SK-N-SH (cell line): ENCODE measurements at regions of chr1 and their contacts with region 1.

Region 1: DNA sequence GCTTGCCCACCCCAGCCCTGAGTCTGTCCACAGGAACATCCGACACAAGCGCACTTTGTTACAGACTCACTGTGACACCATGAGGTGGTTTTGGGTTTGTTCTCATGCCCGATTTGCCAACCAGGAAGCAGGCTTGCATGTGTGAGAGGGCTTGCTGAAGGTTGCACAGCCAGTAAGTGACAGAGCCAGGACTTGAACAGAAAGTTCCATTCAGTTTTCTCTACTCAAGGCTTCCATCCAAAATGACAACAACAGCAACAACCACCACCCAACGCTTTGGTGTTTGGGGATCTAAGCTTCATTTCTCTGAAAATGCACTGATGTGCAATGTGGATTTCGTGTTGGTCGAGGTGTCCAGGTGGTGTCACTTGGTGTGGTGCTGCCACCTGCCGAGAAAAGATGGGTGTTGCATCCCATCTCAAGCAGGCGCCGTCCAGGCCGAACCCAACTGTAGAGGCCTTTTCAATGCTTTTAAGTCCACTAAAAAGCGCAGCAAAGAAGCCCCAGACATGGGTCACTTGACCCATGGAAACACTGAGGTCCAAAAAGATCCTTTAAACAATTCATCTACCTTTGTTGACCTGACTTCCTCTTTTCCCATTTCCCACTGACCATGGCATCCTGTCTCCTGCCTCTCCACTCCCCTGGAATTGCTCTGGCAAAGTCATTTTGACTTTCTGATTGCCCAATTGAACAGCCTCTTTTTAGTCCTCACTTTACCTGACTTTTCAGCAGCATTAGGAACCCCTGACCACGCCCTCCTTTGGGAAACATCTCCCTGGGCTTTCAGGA is 12.2 kb downstream of the CITED4 start:
- DNase-seq: peak; percentile 78
- H3K4me3 ChIP-seq: no peak overlapping the region
- H3K27ac ChIP-seq: no peak overlapping the region
- H3K4me1 ChIP-seq: no peaks in the 10 kb centered on the region; a peak in 1 of 4 replicates
- H3K27me3 ChIP-seq: no peaks in the 10 kb centered on the region
- CTCF ChIP-seq: peak; percentile 84
- EP300 ChIP-seq: no peak
- RAD21 ChIP-seq: peak; percentile 89

Region 2: GRCh38 chr1:40531381-40532061 is 318.5 kb before region 1 on chr1 and contains the start of gene ZNF684:
- CTCF ChIA-PET with region 1: interaction called, 23 read pairs
- POLR2A ChIA-PET with region 1: no interaction called
- DNase-seq: peak; percentile 86
- H3K4me3 ChIP-seq: peak within 1 kb of the TSS; percentile 71 to 76
- H3K27ac ChIP-seq: peak within 1 kb of the TSS; percentile 85 to 95
- H3K4me1 ChIP-seq: peaks cover 0 to 3% of the 10 kb centered on the region in 2 experiments; a peak in 2 of 4 replicates
- H3K27me3 ChIP-seq: no peaks in the 10 kb centered on the region
- CTCF ChIP-seq: no peak
- EP300 ChIP-seq: no peak
- RAD21 ChIP-seq: no peak
- polyA plus RNA-seq, gene ZNF684: 1.8 and 3.0 TPM in 2 replicates

Region 3: GRCh38 chr1:40763742-40764532 is 86.1 kb before region 1 on chr1:
- CTCF ChIA-PET with region 1: interaction called, 13 read pairs
- POLR2A ChIA-PET with region 1: no interaction called
- DNase-seq: no peak
- H3K4me3 ChIP-seq: no peak overlapping the region
- H3K27ac ChIP-seq: no peak overlapping the region
- H3K4me1 ChIP-seq: peaks cover 0 to 13% of the 10 kb centered on the region in 2 experiments; a peak in 2 of 4 replicates
- H3K27me3 ChIP-seq: no peaks in the 10 kb centered on the region
- CTCF ChIP-seq: no peak
- EP300 ChIP-seq: no peak
- RAD21 ChIP-seq: no peak

Region 4: GRCh38 chr1:40810927-40811326 is 39.1 kb before region 1 on chr1:
- CTCF ChIA-PET with region 1: interaction called, 10 read pairs
- POLR2A ChIA-PET with region 1: no interaction called
- DNase-seq: no peak
- H3K4me3 ChIP-seq: no peak overlapping the region
- H3K27ac ChIP-seq: no peak overlapping the region
- H3K4me1 ChIP-seq: no peaks in the 10 kb centered on the region
- H3K27me3 ChIP-seq: no peaks in the 10 kb centered on the region; the same call in 1 of the 2 replicates
- CTCF ChIP-seq: no peak
- EP300 ChIP-seq: no peak
- RAD21 ChIP-seq: no peak

Region 5: DNA sequence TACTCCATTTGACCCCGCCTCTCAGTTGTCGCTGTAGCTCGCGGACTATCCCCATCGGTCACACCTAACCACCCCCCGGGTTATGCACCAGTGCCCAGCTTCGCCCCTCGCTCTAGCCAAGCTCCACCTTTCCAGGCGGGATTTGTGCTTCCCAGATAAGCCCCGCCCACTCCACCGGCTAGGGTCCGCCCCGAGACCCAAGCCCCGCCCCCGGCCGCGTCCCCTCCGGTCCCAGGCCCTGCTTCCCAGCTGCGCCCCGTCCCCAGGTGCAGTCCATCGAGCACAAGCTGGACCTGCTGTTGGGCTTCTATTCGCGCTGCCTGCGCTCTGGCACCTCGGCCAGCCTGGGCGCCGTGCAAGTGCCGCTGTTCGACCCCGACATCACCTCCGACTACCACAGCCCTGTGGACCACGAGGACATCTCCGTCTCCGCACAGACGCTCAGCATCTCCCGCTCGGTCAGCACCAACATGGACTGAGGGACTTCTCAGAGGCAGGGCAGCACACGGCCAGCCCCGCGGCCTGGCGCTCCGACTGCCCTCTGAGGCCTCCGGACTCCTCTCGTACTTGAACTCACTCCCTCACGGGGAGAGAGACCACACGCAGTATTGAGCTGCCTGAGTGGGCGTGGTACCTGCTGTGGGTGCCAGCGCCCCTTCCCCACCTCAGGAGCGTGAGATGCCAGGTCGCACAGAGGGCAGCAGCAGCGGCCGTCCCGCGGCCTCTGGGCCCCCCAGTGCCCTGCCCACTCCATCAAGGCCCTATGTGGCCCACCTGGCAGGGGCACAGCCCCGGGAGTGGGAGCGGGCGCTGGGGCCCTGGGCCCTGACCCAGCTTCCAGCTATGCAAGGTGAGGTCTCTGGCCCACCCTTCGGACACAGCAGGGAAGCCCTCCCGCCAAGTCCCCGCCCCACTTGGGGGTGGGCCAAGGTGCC is 11.7 kb before region 1 on chr1:
- CTCF ChIA-PET with region 1: interaction called, 20 read pairs
- POLR2A ChIA-PET with region 1: no interaction called
- DNase-seq: no peak
- H3K4me3 ChIP-seq: no peak overlapping the region
- H3K27ac ChIP-seq: no peak overlapping the region
- H3K4me1 ChIP-seq: no peaks in the 10 kb centered on the region
- H3K27me3 ChIP-seq: no peaks in the 10 kb centered on the region
- CTCF ChIP-seq: no peak
- EP300 ChIP-seq: no peak
- RAD21 ChIP-seq: no peak

Region 6: GRCh38 chr1:40868051-40868794 is 18.2 kb after region 1 on chr1:
- CTCF ChIA-PET with region 1: interaction called, 60 read pairs
- POLR2A ChIA-PET with region 1: no interaction called
- DNase-seq: no peak
- H3K4me3 ChIP-seq: no peak overlapping the region
- H3K27ac ChIP-seq: peak overlapping the region in 1 of 2 experiments; percentile 31; a peak in 2 of 4 replicates
- H3K4me1 ChIP-seq: peaks cover 2 to 7% of the 10 kb centered on the region in 2 experiments; a peak in 2 of 4 replicates
- H3K27me3 ChIP-seq: no peaks in the 10 kb centered on the region
- CTCF ChIP-seq: no peak
- EP300 ChIP-seq: no peak
- RAD21 ChIP-seq: no peak

Region 7: DNA sequence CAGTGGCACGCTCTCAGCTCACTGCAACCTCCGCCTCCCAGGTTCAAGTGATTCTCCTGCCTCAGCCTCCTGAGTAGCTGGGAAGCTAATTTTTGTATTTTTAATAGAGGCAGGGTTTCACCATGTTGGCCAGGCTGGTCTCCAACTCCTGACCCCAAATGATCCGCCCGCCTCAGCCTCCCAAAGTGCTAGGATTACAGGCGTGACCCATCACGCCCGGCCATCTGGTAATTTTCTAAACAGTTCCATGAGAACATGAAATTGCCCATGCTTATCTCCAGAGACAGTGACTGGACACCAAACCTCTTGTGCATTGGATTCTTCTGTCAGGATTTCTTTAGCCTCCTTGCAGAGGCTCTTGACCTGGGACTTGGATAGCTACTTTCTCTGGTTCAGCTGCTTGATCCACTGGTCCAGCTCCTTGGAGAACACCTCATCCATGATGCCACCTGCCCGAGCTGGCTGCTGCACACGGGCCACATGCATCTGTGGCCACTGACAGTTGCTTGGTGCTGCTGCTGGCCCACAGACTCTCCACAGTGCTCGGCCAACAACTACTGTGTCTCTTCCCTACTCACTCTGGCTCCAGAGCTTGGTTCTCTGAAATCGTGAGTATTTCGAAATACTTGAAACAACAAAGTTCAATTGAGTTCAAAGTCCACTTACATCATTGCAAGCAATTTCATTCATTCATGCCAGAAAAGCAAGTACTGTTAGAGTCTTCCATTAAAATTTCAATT is 89.5 kb after region 1 on chr1:
- CTCF ChIA-PET with region 1: interaction called, 18 read pairs
- POLR2A ChIA-PET with region 1: no interaction called
- DNase-seq: no peak
- H3K4me3 ChIP-seq: no peak overlapping the region
- H3K27ac ChIP-seq: no peak overlapping the region
- H3K4me1 ChIP-seq: no peaks in the 10 kb centered on the region
- H3K27me3 ChIP-seq: no peaks in the 10 kb centered on the region
- CTCF ChIP-seq: no peak
- EP300 ChIP-seq: no peak
- RAD21 ChIP-seq: no peak